Natural killer cell (primary cell): ENCODE measurements at regions of chrX and their contacts with region 1.

Region 1: DNA sequence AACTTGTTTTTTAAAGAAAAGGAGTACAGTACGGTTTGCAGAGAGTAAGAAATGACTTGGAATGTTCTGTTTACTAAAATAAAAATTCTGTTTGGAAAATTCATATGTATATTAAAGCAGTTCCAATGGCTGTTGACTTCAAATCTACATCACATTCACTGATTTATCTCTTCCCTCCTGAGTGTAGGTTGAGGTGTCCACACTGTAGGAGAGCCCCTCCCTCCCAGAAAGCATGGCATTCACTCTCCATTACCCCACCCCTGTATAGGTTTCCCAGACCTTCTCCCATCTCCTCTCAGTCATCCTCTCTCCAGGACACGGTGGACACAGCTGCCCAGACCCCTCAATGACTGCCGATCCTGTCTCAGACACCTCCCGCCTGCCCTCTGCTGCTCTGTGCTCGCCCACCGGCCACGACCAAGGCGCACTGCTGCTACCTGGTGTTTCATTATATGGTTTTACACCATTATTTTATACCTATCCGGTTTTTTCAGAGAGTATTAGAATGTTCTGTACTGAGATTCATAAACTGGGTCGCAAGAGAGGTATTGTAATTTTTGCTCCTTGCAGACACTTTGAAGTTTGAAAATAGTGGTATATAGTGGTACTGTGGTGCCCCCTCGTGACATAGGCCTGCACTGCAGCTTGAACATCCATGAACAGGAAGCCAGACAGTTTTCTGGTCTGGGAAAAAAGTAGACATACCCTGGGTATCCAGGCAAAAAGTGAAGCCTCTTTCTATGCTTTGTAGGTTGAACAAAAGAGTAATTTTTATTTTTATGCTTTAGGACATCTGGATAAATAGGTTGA is 38.8 kb upstream of the BEX4 start:
- DNase-seq: peak; percentile 23 to 70
- ATAC-seq: peak; percentile 63 to 81 (median 79)
- H3K4me3 ChIP-seq: no peak overlapping the region
- H3K4me3 Mint-ChIP-seq: peak overlapping the region; percentile 7
- H3K27ac ChIP-seq: no peak overlapping the region
- H3K27ac Mint-ChIP-seq: no peak overlapping the region
- H3K4me1 ChIP-seq: no peaks in the 10 kb centered on the region
- H3K4me1 Mint-ChIP-seq: peaks cover 5% of the 10 kb centered on the region in 2 donors
- H3K27me3 ChIP-seq: no peaks in the 10 kb centered on the region
- H3K27me3 Mint-ChIP-seq: peaks cover 3 to 40% of the 10 kb centered on the region in 2 donors
- CTCF ChIP-seq: peak; percentile 62

Region 2: GRCh38 chrX:102067966-102068708 is 1108.0 kb before region 1 on chrX:
- intact Hi-C with region 1: loop called (anchors 10 kb)
- DNase-seq: peak in 1 of 2 donors; percentile 51
- ATAC-seq: no peak
- H3K4me3 ChIP-seq: no peak overlapping the region
- H3K4me3 Mint-ChIP-seq: no peak overlapping the region
- H3K27ac ChIP-seq: no peak overlapping the region
- H3K27ac Mint-ChIP-seq: no peak overlapping the region
- H3K4me1 ChIP-seq: no peaks in the 10 kb centered on the region
- H3K4me1 Mint-ChIP-seq: no peaks in the 10 kb centered on the region
- H3K27me3 ChIP-seq: no peaks in the 10 kb centered on the region
- H3K27me3 Mint-ChIP-seq: peaks cover 0 to 12% of the 10 kb centered on the region in 2 donors
- CTCF ChIP-seq: no peak

Region 3: DNA sequence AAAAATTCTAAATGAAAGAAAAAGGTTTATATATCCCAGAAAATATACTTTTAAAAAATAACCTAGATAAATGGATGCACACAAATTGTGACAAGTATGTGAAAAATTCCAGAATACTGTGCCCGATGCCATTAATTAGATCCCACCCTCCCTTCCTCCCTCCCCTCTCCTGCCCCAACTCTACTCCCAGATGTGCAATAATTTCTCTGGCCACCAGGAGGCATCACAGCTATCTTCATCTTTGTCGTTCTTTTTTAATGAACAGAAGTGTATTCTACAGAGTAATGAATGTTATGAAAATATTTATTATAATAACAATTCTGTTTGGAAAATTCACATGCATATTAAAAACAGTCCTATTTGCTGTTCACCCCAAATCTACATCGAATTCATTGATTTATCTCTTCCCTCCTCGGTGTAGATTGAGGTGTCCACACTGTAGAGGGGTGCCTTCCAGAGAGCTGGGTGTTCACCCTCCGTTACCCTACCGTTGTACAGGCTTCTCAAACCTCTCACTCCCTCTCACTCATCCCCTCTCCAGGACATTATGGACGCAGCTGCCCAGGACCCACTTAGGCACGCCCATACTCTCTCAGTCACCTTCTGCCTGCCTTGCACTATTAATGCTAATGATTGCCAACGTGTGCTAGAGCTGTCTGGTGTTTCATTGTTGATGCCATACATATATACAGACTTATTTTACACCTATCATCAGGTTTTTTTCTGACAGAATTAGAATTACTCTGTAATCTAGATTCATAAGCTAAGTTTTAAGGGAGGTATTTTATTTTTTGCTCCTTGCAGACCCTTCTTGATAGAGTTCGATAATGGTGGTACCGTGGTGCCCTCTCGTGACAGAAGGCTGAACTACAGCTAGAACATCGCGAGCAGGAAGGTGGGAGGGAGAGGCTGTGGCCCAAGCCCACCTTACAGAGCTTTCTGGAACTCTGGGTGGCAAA is 225.0 kb before region 1 on chrX:
- intact Hi-C with region 1: loop called (anchors 2 kb)
- DNase-seq: peak; percentile 27 to 71
- ATAC-seq: peak; percentile 70 to 78 (median 70)
- H3K4me3 ChIP-seq: peak overlapping the region; percentile 16
- H3K4me3 Mint-ChIP-seq: peak overlapping the region; percentile 78
- H3K27ac ChIP-seq: no peak overlapping the region
- H3K27ac Mint-ChIP-seq: no peak overlapping the region
- H3K4me1 ChIP-seq: peaks cover 4% of the 10 kb centered on the region
- H3K4me1 Mint-ChIP-seq: peaks cover 7 to 13% of the 10 kb centered on the region in 2 donors
- H3K27me3 ChIP-seq: no peaks in the 10 kb centered on the region
- H3K27me3 Mint-ChIP-seq: peaks cover 3 to 15% of the 10 kb centered on the region in 2 donors
- CTCF ChIP-seq: peak; percentile 54

Region 4: GRCh38 chrX:103214870-103215424 is 38.8 kb after region 1 on chrX and contains the start of gene BEX4:
- intact Hi-C with region 1: no loop called
- DNase-seq: peak; percentile 80 to 89
- ATAC-seq: peak; percentile 92 to 97 (median 94)
- H3K4me3 ChIP-seq: peak within 1 kb of the TSS; percentile 82
- H3K4me3 Mint-ChIP-seq: peak within 1 kb of the TSS; percentile 94
- H3K27ac ChIP-seq: peak within 1 kb of the TSS; percentile 95
- H3K27ac Mint-ChIP-seq: peak within 1 kb of the TSS; percentile 81 to 94
- H3K4me1 ChIP-seq: peaks cover 13% of the 10 kb centered on the region
- H3K4me1 Mint-ChIP-seq: peaks cover 0 to 11% of the 10 kb centered on the region in 2 donors
- H3K27me3 ChIP-seq: no peaks in the 10 kb centered on the region
- H3K27me3 Mint-ChIP-seq: peaks cover 1 to 18% of the 10 kb centered on the region in 2 donors
- CTCF ChIP-seq: no peak
- total RNA-seq, gene BEX4: 30.8 to 53.4 (median 47.1) TPM

Region 5: GRCh38 chrX:103362504-103362903 is 186.4 kb after region 1 on chrX:
- intact Hi-C with region 1: no loop called
- DNase-seq: no peak
- ATAC-seq: no peak
- H3K4me3 ChIP-seq: no peak overlapping the region
- H3K4me3 Mint-ChIP-seq: no peak overlapping the region
- H3K27ac ChIP-seq: no peak overlapping the region
- H3K27ac Mint-ChIP-seq: no peak overlapping the region
- H3K4me1 ChIP-seq: no peaks in the 10 kb centered on the region
- H3K4me1 Mint-ChIP-seq: no peaks in the 10 kb centered on the region
- H3K27me3 ChIP-seq: no peaks in the 10 kb centered on the region
- H3K27me3 Mint-ChIP-seq: peaks cover 7 to 22% of the 10 kb centered on the region in 2 donors
- CTCF ChIP-seq: no peak

Region 6: GRCh38 chrX:103495786-103496185 is 319.6 kb after region 1 on chrX:
- intact Hi-C with region 1: no loop called
- DNase-seq: no peak
- ATAC-seq: no peak
- H3K4me3 ChIP-seq: no peak overlapping the region
- H3K4me3 Mint-ChIP-seq: no peak overlapping the region
- H3K27ac ChIP-seq: no peak overlapping the region
- H3K27ac Mint-ChIP-seq: no peak overlapping the region
- H3K4me1 ChIP-seq: no peaks in the 10 kb centered on the region
- H3K4me1 Mint-ChIP-seq: no peaks in the 10 kb centered on the region
- H3K27me3 ChIP-seq: no peaks in the 10 kb centered on the region
- H3K27me3 Mint-ChIP-seq: peaks cover 3 to 12% of the 10 kb centered on the region in 2 donors
- CTCF ChIP-seq: no peak